ENCODE measurements at regions of chr7 and their contacts with region 1.

Region 1: GRCh38 chr7:106022193-106022821 is 59.2 kb downstream of the CDHR3 start:
- DNase-seq: peak; percentile 45 to 97 (median 90)
- ATAC-seq: peak; percentile 80 to 86
- H3K4me3 Mint-ChIP-seq: peak overlapping the region; percentile 49 to 80 (median 71)
- H3K27ac Mint-ChIP-seq: peak overlapping the region; percentile 83 to 99 (median 98)
- H3K4me1 Mint-ChIP-seq: peaks cover 32 to 80% (median 77%) of the 10 kb centered on the region in 4 donors
- H3K27me3 Mint-ChIP-seq: peaks cover 0 to 3% (median 0%) of the 10 kb centered on the region in 5 donors

Region 2: GRCh38 chr7:106041140-106041717 is 18.9 kb after region 1 on chr7:
- POLR2A ChIA-PET with region 1: interaction called, 24 read pairs
- DNase-seq: peak in 4 of 10 donors; percentile 21 to 37 (median 24)
- ATAC-seq: peak; percentile 10 to 12
- H3K4me3 Mint-ChIP-seq: peak overlapping the region in 8 of 10 donors; percentile 40 to 80 (median 68)
- H3K27ac Mint-ChIP-seq: peak overlapping the region in 9 of 10 donors; percentile 48 to 93 (median 78)
- H3K4me1 Mint-ChIP-seq: peaks cover 27 to 49% (median 41%) of the 10 kb centered on the region in 4 donors
- H3K27me3 Mint-ChIP-seq: peaks cover 0 to 4% (median 0%) of the 10 kb centered on the region in 5 donors

Region 3: GRCh38 chr7:106056513-106057203 is 34.4 kb after region 1 on chr7:
- POLR2A ChIA-PET with region 1: no interaction called
- DNase-seq: peak; percentile 47 to 86 (median 68)
- ATAC-seq: peak; percentile 95 to 96
- H3K4me3 Mint-ChIP-seq: peak overlapping the region in 7 of 10 donors; percentile 38 to 58 (median 49)
- H3K27ac Mint-ChIP-seq: peak overlapping the region in 1 of 10 donors; percentile 53
- H3K4me1 Mint-ChIP-seq: peaks cover 7 to 43% (median 27%) of the 10 kb centered on the region in 4 donors
- H3K27me3 Mint-ChIP-seq: no peaks in the 10 kb centered on the region